Right cardiac atrium (tissue), 5 donors: ENCODE measurements at regions of chr3 and their contacts with region 1.

Region 1: DNA sequence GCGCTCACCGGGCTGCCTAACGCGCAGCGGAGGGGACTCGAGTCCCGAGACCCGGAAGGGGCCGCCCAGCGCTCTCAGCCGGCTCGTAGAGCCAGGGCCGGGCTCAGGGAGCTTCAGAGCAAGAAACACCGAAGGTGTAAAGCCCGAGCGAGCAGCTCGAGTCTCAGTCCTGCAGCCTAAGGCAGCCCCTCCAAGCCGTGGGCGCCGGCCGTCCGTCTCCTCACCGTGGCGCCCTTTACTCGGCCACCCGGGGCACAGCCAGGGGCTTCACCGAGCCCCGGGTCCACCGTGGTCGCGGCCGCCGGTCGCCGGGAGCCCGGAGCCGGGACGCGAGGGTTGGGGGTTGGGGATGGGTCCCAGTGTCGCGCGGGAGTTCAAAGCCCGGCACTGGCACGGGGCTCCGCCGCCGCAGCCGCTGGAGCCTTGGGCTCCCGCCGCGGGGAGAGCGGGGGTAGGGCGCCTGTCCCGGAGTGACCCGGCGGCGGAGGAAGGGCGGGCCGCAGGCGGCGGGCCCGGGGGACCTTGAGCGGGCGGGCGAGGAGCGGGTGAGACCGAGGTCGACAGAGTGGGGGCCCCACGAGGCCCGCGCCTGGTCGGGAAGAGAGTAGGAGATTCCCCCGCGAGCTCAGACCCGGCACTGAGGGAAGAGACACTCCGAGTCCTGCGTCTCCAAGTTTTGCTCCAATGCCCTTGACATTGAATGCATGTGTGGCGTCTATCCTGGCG is 26.9 kb upstream of the THRB start:
- DNase-seq: peak; percentile 72 to 88 (median 87)
- ATAC-seq: peak; percentile 95 to 97
- H3K4me3 ChIP-seq: peak overlapping the region; percentile 74
- H3K27ac ChIP-seq: peak overlapping the region; percentile 16
- H3K4me1 ChIP-seq: no peaks in the 10 kb centered on the region
- H3K27me3 ChIP-seq: no peaks in the 10 kb centered on the region

Region 2: DNA sequence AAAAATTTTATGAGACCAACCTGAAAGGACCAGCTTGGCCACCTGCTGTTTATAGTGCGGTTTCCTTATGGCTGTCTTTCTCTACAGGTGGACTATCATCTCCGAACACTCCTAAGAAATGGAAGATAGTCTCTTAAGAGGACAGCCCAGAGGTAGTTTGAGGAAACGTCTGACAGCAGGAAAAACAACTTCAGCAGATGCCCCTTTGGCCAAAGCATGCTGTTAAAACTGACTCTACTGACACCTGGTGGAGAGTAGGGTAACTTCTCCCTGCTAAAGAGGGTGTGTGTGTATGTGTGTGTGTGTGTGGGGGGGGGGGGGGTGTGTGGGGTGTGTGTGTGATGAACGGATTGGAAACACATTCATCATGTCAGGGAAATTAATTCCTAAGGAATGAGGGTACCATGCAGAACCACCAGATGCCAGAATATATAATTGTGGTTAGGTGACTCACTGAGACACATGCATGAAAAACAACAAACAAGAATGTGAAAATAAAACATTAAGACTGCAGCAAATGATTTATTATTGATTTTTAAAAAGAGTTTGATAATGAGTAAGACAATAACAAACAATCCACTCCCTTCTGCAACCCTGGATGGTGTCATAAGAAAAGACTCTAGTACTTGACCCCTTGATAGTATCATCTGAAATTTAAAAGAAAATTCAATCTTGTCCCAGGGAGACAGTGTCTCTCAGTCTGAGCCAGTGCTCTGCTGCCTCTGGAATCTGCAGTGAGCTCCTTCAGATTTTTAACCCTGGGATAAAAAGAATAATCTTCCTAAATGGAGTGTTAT is 283.4 kb before region 1 on chr3:
- intact Hi-C with region 1: no loop called
- DNase-seq: no peak
- ATAC-seq: peak; percentile 73 to 76
- H3K4me3 ChIP-seq: no peak overlapping the region
- H3K27ac ChIP-seq: no peak overlapping the region
- H3K4me1 ChIP-seq: peaks cover 3% of the 10 kb centered on the region
- H3K27me3 ChIP-seq: no peaks in the 10 kb centered on the region

Region 3: GRCh38 chr3:24305795-24306467 is 215.7 kb before region 1 on chr3:
- intact Hi-C with region 1: no loop called
- DNase-seq: no peak
- ATAC-seq: peak; percentile 38 to 54
- H3K4me3 ChIP-seq: no peak overlapping the region
- H3K27ac ChIP-seq: no peak overlapping the region
- H3K4me1 ChIP-seq: peaks cover 4% of the 10 kb centered on the region
- H3K27me3 ChIP-seq: no peaks in the 10 kb centered on the region

Region 4: DNA sequence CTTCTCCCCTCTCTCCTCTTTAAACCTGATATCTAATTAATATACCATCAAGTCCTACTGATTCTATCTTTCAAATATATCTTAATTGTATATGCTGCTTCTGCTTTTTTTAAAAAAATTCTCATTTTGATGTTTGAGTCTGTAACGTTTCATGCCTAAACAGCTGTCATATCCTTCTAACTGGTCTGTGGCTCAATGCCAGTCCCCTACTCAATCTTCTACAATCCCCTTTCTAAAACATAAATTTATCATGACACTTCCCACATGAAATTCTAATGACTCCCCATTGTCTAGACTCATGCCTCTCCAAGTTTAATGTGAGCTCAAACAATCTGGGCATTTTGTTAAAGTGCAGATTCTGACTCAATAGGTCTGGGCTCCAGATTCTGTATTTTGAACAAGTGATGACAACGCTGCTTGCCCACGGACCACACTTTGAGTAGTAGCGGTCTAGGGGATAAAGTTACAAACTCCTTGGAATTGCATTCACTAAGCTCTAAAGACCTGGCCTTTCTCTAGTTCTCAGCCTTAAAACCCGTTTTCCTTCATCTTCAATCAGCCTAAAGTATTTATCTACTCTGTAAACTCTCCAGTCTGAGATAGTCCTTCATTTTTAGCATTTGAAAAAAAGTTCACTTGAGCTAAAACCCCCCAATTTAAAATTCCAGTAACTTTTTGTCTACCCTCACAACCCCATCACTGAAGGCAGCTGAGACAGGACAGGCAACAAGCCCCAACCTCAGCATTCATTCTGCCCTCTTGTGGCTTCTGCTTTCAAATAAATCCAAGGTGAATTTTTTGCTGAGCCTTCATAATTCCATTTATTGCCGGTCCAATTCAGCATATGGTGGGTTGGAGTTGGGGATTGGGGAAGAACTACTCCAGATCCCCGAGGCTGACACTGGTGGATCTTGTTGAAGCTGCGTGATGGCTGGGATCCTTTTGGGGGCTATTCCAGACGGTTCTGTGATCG is 61.1 kb after region 1 on chr3:
- intact Hi-C with region 1: loop called in 1 of 4 experiments (anchors 10 kb)
- DNase-seq: no peak
- ATAC-seq: peak in 1 of 2 donors; percentile 41
- H3K4me3 ChIP-seq: no peak overlapping the region
- H3K27ac ChIP-seq: no peak overlapping the region
- H3K4me1 ChIP-seq: no peaks in the 10 kb centered on the region
- H3K27me3 ChIP-seq: no peaks in the 10 kb centered on the region